ENCODE measurements at regions of chr9 and their contacts with region 1.

Region 1: GRCh38 chr9:125746017-125746773 is 978 bp upstream of the PBX3 start:
- DNase-seq: peak; percentile 88 to 92 (median 90)
- H3K4me3 ChIP-seq: peak overlapping the region; percentile 66 to 78
- H3K4me3 Mint-ChIP-seq: peak overlapping the region; percentile 91 to 99 (median 94)
- H3K27ac ChIP-seq: peak overlapping the region; percentile 42
- H3K27ac Mint-ChIP-seq: peak overlapping the region; percentile 90 to 98 (median 93)
- H3K4me1 ChIP-seq: peaks cover 28% of the 10 kb centered on the region
- H3K4me1 Mint-ChIP-seq: peaks cover 14 to 32% (median 24%) of the 10 kb centered on the region in 4 donors
- H3K27me3 ChIP-seq: no peaks in the 10 kb centered on the region
- H3K27me3 Mint-ChIP-seq: no peaks in the 10 kb centered on the region

Region 2: DNA sequence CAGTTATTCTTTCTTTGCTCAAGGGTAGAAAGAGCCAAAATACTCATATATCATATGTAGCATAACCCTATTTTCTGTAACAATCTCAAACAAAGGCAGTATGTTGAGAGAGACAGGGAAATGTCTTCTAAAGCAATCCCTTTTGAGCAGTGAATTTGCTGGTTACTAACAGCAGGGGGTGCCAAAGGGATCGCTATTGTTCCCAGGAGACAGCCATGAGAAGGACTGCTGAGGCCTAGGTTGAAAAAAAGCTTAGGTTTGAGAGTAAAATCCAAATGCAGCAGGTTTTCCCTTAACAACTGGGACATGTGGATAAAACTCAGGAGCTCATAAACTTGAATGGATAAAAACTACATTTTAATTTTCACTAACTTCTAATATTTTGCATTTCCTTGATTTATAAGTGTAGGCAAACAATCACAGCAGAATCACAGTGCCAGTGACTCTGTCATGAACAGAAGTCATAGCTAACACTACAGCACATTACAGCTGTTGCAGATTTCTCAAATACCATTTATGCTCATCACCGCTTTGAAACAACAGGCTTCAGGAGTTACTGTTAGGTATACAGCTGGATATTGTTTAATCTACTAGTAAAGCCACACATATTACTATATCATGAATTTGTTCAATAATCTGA is 187.6 kb before region 1 on chr9:
- CTCF ChIA-PET with region 1: no interaction called
- POLR2A ChIA-PET with region 1: no interaction called
- intact Hi-C with region 1: loop called (anchors 2 kb)
- DNase-seq: peak; percentile 34 to 53 (median 48)
- H3K4me3 ChIP-seq: no peak overlapping the region
- H3K4me3 Mint-ChIP-seq: no peak overlapping the region
- H3K27ac ChIP-seq: no peak overlapping the region
- H3K27ac Mint-ChIP-seq: no peak overlapping the region
- H3K4me1 ChIP-seq: no peaks in the 10 kb centered on the region
- H3K4me1 Mint-ChIP-seq: peaks cover 11 to 16% (median 13%) of the 10 kb centered on the region in 4 donors
- H3K27me3 ChIP-seq: no peaks in the 10 kb centered on the region
- H3K27me3 Mint-ChIP-seq: no peaks in the 10 kb centered on the region

Region 3: DNA sequence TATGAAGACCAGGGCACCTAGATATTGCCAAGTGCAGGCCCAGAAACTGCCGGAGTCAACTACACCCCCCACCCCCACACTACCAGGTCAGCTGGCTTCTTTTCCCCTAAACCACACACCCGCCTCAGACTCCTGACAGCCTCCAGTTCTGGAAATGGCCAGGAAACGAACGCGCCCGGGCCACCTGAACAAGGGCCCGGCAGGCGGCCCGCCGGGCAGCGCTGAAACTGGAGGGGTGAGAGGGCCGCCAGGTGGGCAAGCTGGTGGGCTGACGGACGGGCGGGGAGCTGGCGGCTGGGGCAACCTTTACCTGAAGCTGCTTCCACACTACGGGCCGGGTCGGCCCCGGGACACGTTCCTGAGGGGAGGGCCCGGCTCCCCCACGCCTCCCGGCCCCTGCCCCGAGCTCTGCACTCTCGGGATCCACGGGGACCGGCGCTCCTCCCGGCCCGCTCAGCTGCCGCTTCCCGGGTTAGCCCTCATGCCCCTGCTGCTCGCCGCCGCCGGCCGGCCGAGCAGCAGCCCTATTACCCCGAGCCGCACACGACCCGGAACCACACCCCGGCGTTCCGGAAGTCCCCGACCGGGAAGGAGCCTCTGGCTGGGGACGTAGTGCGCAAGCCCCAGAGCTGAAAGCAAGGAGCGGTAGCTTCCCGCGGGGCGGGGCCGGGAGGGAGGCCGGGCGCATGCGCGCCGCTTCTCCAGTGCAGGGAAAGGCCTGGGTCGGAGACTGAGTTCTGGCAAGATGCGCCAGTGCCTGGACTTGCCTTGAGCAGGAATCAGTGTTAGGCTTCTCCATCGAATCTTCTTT is 39.3 kb before region 1 on chr9 and contains the start of gene MAPKAP1:
- CTCF ChIA-PET with region 1: interaction called, 8 read pairs
- POLR2A ChIA-PET with region 1: interaction called, 22 read pairs
- intact Hi-C with region 1: loop called (anchors 1 kb)
- DNase-seq: peak; percentile 88 to 92 (median 88)
- H3K4me3 ChIP-seq: peak within 1 kb of the TSS; percentile 18 to 56
- H3K4me3 Mint-ChIP-seq: peak within 1 kb of the TSS; percentile 89 to 91 (median 90)
- H3K27ac ChIP-seq: peak within 1 kb of the TSS; percentile 65
- H3K27ac Mint-ChIP-seq: peak within 1 kb of the TSS; percentile 68 to 92 (median 89)
- H3K4me1 ChIP-seq: peaks cover 24% of the 10 kb centered on the region
- H3K4me1 Mint-ChIP-seq: peaks cover 26 to 44% (median 36%) of the 10 kb centered on the region in 4 donors
- H3K27me3 ChIP-seq: no peaks in the 10 kb centered on the region
- H3K27me3 Mint-ChIP-seq: peaks cover 0 to 2% of the 10 kb centered on the region in 2 donors
- total RNA-seq, gene MAPKAP1: 51.6 to 55.6 TPM

Region 4: DNA sequence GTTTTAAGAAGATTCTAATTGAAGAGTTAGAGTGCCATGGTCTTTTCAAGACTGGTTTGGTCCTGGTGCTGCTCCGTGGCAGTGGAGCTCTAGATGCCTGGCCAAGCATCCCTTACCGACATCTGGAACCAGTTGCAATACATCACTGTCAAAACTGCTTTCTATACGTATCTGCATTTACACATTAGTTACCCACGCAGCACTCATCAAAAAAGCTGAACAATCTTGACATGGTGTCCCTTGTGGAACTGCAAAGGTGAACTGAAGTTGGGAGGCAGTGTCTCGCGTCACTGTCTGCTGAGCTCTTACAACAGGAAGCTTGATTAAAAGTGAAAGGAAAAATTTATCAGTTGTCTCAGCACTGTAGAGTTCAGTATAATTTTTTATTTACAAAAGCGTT is 83.5 kb after region 1 on chr9:
- CTCF ChIA-PET with region 1: no interaction called
- POLR2A ChIA-PET with region 1: interaction called, 11 read pairs
- intact Hi-C with region 1: loop called (anchors 5 kb)
- DNase-seq: peak; percentile 58 to 78 (median 66)
- H3K4me3 ChIP-seq: peak overlapping the region; percentile 52 to 61
- H3K4me3 Mint-ChIP-seq: peak overlapping the region; percentile 85 to 93 (median 90)
- H3K27ac ChIP-seq: peak overlapping the region; percentile 40
- H3K27ac Mint-ChIP-seq: peak overlapping the region; percentile 87 to 97 (median 93)
- H3K4me1 ChIP-seq: peaks cover 28% of the 10 kb centered on the region
- H3K4me1 Mint-ChIP-seq: peaks cover 11 to 29% (median 19%) of the 10 kb centered on the region in 4 donors
- H3K27me3 ChIP-seq: no peaks in the 10 kb centered on the region
- H3K27me3 Mint-ChIP-seq: no peaks in the 10 kb centered on the region

Region 5: DNA sequence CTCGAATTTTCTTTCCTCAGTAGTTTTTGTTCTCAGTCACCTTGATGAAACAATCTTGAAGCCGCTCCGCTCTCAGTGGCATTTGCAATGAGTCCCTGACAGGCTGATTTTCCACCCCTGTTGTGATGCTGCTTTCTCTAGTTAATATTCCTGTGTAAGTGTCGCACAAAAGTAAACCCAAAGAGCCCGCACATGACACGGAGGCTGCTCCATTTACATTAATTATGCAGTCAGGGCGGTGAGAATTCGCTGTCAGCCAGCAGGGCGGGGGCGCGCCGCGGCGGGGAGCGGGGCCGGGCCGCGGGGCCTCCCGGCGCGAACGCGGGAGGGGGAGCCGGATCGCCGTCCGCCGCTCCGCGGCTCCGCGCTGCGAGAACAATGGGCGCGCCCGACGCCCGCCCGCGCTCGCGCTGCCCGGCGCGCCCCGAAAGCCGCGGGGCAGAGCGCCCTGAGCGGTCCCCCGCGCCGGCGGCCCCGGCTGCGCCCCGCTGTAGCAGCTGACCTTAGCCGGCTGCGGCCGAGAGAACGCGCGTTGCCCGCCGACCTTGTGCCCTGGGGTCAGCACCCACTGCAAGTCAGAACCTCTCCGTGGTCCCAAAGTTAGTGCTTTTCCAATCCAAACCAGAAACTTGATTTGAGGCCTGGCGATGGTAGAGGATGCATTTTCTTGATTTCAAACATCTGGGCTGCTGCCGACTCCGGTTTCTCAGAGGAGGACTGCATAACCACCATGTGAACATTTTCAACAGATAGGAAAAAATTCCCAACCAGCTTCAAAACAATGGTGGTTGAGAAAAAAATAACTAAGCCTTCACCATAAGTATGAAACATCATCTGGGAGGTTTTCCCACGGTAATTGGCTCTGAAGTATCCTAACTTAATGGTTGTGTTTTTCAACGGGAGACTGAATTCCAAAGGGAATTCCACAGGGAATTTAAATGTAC is 143.6 kb after region 1 on chr9:
- CTCF ChIA-PET with region 1: no interaction called
- POLR2A ChIA-PET with region 1: no interaction called
- intact Hi-C with region 1: loop called (anchors 5 kb)
- DNase-seq: peak; percentile 24 to 41 (median 32)
- H3K4me3 ChIP-seq: peak overlapping the region in 1 of 2 donors; percentile 42
- H3K4me3 Mint-ChIP-seq: peak overlapping the region; percentile 80 to 90 (median 84)
- H3K27ac ChIP-seq: no peak overlapping the region
- H3K27ac Mint-ChIP-seq: peak overlapping the region in 3 of 7 donors; percentile 30 to 77 (median 39)
- H3K4me1 ChIP-seq: peaks cover 7% of the 10 kb centered on the region
- H3K4me1 Mint-ChIP-seq: peaks cover 5 to 10% (median 8%) of the 10 kb centered on the region in 4 donors
- H3K27me3 ChIP-seq: peaks cover 20% of the 10 kb centered on the region
- H3K27me3 Mint-ChIP-seq: peaks cover 5 to 12% of the 10 kb centered on the region in 2 donors

Region 6: DNA sequence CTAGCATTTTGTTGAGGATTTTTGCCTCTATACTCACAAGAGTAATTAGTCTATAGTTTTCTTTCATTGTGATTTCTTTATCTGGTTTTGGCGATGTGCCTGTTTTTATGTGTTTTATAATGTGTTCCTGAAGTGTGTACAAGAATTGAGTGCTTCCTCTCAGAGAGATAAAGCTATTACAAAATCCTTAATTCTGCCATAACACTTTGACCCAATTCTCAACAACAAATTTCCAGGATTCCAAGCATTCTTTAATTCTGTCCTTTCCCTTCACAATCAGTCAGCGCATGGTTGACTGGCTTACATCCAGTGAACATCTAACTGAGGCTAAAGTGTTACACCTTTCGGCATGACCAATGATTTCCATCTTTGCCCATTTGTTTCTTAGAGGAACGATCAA is 297.5 kb after region 1 on chr9:
- CTCF ChIA-PET with region 1: no interaction called
- POLR2A ChIA-PET with region 1: no interaction called
- intact Hi-C with region 1: no loop called
- DNase-seq: no peak
- H3K4me3 ChIP-seq: no peak overlapping the region
- H3K4me3 Mint-ChIP-seq: no peak overlapping the region
- H3K27ac ChIP-seq: no peak overlapping the region
- H3K27ac Mint-ChIP-seq: no peak overlapping the region
- H3K4me1 ChIP-seq: no peaks in the 10 kb centered on the region
- H3K4me1 Mint-ChIP-seq: no peaks in the 10 kb centered on the region
- H3K27me3 ChIP-seq: no peaks in the 10 kb centered on the region
- H3K27me3 Mint-ChIP-seq: peaks cover 10 to 17% of the 10 kb centered on the region in 2 donors